ENCODE measurements at regions of chr1 and their contacts with region 1.

Region 1: GRCh38 chr1:23168457-23169194 is at the start of gene LUZP1:
- DNase-seq: peak; percentile 78 to 85 (median 79)
- H3K4me3 ChIP-seq: peak within 1 kb of the TSS; percentile 85 to 97 (median 92)
- H3K4me3 Mint-ChIP-seq: peak within 1 kb of the TSS; percentile 99 to 100
- H3K27ac ChIP-seq: peak within 1 kb of the TSS; percentile 67 to 76
- H3K27ac Mint-ChIP-seq: peak within 1 kb of the TSS; percentile 77 to 97 (median 95)
- H3K4me1 ChIP-seq: peaks cover 24 to 26% of the 10 kb centered on the region in 2 donors
- H3K4me1 Mint-ChIP-seq: peaks cover 30% of the 10 kb centered on the region
- H3K27me3 ChIP-seq: peaks cover 0 to 8% of the 10 kb centered on the region in 2 donors
- H3K27me3 Mint-ChIP-seq: peaks cover 4 to 16% (median 9%) of the 10 kb centered on the region in 3 donors
- CTCF ChIP-seq: no peak
- polyA plus RNA-seq, gene LUZP1: 4.4 to 8.7 (median 5.8) TPM

Region 2: GRCh38 chr1:22712502-22713271 is 455.9 kb before region 1 on chr1:
- intact Hi-C with region 1: no loop called
- DNase-seq: no peak
- H3K4me3 ChIP-seq: no peak overlapping the region
- H3K4me3 Mint-ChIP-seq: peak overlapping the region in 1 of 2 donors; percentile 92
- H3K27ac ChIP-seq: no peak overlapping the region
- H3K27ac Mint-ChIP-seq: no peak overlapping the region
- H3K4me1 ChIP-seq: peaks cover 35 to 57% of the 10 kb centered on the region in 2 donors
- H3K4me1 Mint-ChIP-seq: peaks cover 37% of the 10 kb centered on the region
- H3K27me3 ChIP-seq: peaks cover 14 to 48% of the 10 kb centered on the region in 2 donors
- H3K27me3 Mint-ChIP-seq: peaks cover 41 to 64% (median 53%) of the 10 kb centered on the region in 3 donors
- CTCF ChIP-seq: no peak

Region 3: DNA sequence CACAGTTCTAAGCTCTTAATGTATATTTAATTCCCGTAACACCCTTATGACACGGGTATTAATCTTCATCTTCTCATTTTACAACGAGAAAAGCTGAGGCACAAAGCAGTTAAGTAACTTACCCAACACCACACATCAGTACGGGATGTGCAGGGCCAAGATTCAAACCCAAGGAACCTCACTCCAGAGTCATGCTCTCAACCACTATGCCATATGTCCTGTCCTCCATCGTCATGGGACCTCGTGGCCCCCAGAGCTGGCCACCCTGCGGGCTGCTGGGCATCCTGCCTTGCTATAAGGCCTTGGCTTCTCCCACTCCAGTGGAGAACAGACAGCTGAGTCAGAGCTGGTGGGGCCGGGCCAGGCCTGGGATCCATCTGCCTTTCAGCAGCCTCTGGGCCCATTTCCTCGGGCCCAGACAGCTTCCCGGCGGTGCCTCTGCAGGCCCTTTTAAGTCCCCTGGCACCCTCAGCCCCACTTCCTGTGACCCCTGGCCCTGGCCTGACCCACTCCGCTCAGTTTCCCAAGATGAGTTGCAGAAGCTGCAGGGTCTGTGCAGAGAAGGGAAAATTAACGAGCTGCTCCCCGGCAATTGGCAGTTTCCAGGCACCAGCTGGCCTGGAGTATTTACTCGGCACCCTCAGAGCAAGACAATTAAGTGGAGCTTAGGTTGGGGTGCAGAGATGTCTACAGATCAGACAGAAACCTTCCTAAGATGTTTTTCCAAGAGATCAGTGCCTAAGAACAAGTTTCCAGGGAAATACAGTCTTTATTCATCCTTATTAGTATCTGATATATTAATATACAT is 359.7 kb before region 1 on chr1:
- intact Hi-C with region 1: no loop called
- DNase-seq: no peak
- H3K4me3 ChIP-seq: no peak overlapping the region
- H3K4me3 Mint-ChIP-seq: no peak overlapping the region
- H3K27ac ChIP-seq: no peak overlapping the region
- H3K27ac Mint-ChIP-seq: no peak overlapping the region
- H3K4me1 ChIP-seq: no peaks in the 10 kb centered on the region
- H3K4me1 Mint-ChIP-seq: no peaks in the 10 kb centered on the region
- H3K27me3 ChIP-seq: no peaks in the 10 kb centered on the region
- H3K27me3 Mint-ChIP-seq: peaks cover 4 to 8% (median 4%) of the 10 kb centered on the region in 3 donors
- CTCF ChIP-seq: no peak

Region 4: GRCh38 chr1:23108918-23109533 is 59.6 kb before region 1 on chr1:
- intact Hi-C with region 1: loop called in 1 of 2 experiments (anchors 5 kb)
- DNase-seq: no peak
- H3K4me3 ChIP-seq: no peak overlapping the region
- H3K4me3 Mint-ChIP-seq: no peak overlapping the region
- H3K27ac ChIP-seq: no peak overlapping the region
- H3K27ac Mint-ChIP-seq: no peak overlapping the region
- H3K4me1 ChIP-seq: peaks cover 2 to 6% of the 10 kb centered on the region in 2 donors
- H3K4me1 Mint-ChIP-seq: peaks cover 12% of the 10 kb centered on the region
- H3K27me3 ChIP-seq: no peaks in the 10 kb centered on the region
- H3K27me3 Mint-ChIP-seq: peaks cover 0 to 1% (median 0%) of the 10 kb centered on the region in 3 donors
- CTCF ChIP-seq: no peak

Measured in CD14-positive monocyte (primary cell).